CD4-positive, alpha-beta memory T cell (primary cell): ENCODE measurements at regions of chr1 and their contacts with region 1.

Region 1: DNA sequence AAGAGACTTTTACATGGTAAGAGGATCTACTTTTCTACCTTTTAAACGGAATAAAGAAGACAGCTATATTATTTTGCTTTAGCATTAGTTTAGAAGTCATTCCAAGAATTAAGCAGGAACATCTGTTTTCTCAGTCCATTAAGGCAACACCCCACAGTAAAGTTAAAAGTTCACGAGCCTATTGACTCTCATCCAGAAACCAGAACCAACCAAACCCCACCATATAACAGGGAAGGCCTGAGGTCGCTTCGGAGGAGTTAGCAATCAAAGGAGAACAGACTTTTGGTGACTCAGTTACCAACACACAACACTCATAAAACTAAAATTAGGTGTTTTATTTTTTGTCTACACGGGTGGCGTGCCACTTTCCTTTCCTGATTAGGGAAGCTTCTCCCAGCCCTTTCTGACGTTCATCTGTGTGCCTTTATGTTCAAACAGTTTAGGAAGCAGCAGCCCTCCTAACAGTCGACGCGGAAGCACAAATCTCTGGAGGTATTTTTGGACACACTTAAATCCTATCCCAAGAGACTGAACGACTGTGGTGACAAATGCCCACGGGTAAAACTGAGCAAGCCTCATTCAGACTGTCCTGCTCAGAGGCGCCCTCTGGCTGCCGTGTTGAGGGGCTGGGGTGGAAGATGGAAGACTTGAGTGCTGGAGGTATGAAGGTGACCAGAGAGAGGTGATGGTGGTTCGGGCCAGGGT is 8.6 kb upstream of the PLA2G2C start:
- DNase-seq: peak; percentile 58 to 72 (median 63)
- H3K4me3 ChIP-seq: no peak overlapping the region
- H3K4me3 Mint-ChIP-seq: no peak overlapping the region
- H3K27ac ChIP-seq: no peak overlapping the region
- H3K27ac Mint-ChIP-seq: peak overlapping the region in 1 of 7 donors; percentile 27
- H3K4me1 ChIP-seq: peaks cover 3% of the 10 kb centered on the region
- H3K4me1 Mint-ChIP-seq: peaks cover 0 to 7% (median 2%) of the 10 kb centered on the region in 4 donors
- H3K27me3 ChIP-seq: no peaks in the 10 kb centered on the region
- H3K27me3 Mint-ChIP-seq: peaks cover 2% of the 10 kb centered on the region in 2 donors

Region 2: DNA sequence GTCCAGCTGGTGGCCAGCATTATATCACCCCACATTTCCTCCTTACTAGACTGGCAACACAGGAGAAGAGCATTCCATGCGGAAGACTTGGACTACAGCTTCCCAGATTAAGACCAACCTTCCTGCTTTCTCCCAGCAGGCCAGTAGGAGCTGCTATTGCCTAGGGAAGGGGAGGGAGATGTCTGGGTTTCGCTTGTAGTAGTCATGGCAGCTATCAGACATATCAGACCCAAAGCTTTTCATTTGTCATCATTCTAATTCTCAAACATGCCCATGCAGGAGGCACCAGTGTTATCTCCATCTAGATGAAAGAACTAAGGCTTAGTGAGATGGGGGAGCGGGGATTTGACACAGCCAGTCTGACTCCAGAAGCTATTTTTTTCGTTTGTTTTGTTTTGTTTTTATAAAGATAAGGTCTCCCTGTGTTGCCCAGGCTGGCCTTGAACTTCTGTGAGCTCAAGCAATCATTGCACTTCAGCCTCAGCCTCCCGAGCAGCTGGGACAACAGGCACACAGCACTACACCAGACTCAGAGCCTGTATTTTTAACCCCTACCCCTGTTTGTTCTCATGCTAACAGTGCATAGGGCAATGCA is 220.0 kb before region 1 on chr1:
- CTCF ChIA-PET with region 1: interaction called, 10 read pairs
- POLR2A ChIA-PET with region 1: no interaction called
- intact Hi-C with region 1: loop called (anchors 2 kb)
- DNase-seq: peak in 4 of 5 donors; percentile 16 to 26 (median 24)
- H3K4me3 ChIP-seq: no peak overlapping the region
- H3K4me3 Mint-ChIP-seq: no peak overlapping the region
- H3K27ac ChIP-seq: no peak overlapping the region
- H3K27ac Mint-ChIP-seq: no peak overlapping the region
- H3K4me1 ChIP-seq: no peaks in the 10 kb centered on the region
- H3K4me1 Mint-ChIP-seq: peaks cover 0 to 2% (median 0%) of the 10 kb centered on the region in 4 donors
- H3K27me3 ChIP-seq: no peaks in the 10 kb centered on the region
- H3K27me3 Mint-ChIP-seq: peaks cover 22 to 23% of the 10 kb centered on the region in 2 donors

Region 3: GRCh38 chr1:20151906-20152598 is 42.9 kb before region 1 on chr1:
- CTCF ChIA-PET with region 1: interaction called, 33 read pairs
- POLR2A ChIA-PET with region 1: no interaction called
- intact Hi-C with region 1: loop called (anchors 1 kb)
- DNase-seq: peak; percentile 67 to 73 (median 70)
- H3K4me3 ChIP-seq: peak overlapping the region; percentile 49 to 56
- H3K4me3 Mint-ChIP-seq: peak overlapping the region; percentile 69 to 92 (median 84)
- H3K27ac ChIP-seq: no peak overlapping the region
- H3K27ac Mint-ChIP-seq: peak overlapping the region in 1 of 7 donors; percentile 24
- H3K4me1 ChIP-seq: peaks cover 17% of the 10 kb centered on the region
- H3K4me1 Mint-ChIP-seq: peaks cover 11 to 18% (median 14%) of the 10 kb centered on the region in 4 donors
- H3K27me3 ChIP-seq: no peaks in the 10 kb centered on the region
- H3K27me3 Mint-ChIP-seq: no peaks in the 10 kb centered on the region

Region 4: DNA sequence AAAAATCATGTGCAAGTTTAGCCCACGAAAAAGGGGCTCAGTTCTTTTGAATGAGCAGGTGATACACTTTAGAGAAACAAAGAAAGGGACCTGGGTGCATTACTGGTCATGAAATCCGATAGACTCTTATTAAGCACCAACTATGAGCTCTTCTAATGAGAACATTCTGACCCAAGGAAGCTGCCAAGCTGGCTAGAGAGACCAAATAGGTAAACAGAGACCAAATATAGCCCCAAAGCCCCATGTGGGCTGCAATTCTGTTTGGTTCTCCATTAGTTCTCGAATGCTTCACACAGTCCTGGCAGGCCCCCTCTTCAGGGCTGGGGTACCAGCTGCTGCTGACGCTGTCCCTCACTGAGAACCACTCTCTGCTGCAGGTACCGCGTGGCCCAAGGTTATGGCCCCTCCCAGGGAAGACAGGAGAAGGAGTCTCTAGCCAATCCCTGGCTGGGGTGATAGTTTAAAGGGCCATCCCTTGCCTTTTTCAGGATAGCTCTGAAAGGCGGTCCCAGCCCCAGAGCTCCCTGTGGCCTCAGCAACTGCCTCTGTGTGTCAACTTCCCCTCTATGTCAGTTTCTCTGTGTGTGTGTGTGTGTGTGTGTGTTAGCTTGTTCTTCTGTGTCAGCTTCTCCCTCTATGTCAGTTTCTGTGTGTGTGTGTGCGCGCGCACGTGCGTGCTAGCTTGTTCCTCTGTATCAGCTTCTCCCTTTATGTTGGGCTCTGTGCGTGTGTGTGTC is 16.1 kb before region 1 on chr1:
- CTCF ChIA-PET with region 1: interaction called, 58 read pairs
- POLR2A ChIA-PET with region 1: no interaction called
- intact Hi-C with region 1: no loop called
- DNase-seq: no peak
- H3K4me3 ChIP-seq: no peak overlapping the region
- H3K4me3 Mint-ChIP-seq: no peak overlapping the region
- H3K27ac ChIP-seq: no peak overlapping the region
- H3K27ac Mint-ChIP-seq: no peak overlapping the region
- H3K4me1 ChIP-seq: no peaks in the 10 kb centered on the region
- H3K4me1 Mint-ChIP-seq: peaks cover 6 to 13% (median 8%) of the 10 kb centered on the region in 4 donors
- H3K27me3 ChIP-seq: no peaks in the 10 kb centered on the region
- H3K27me3 Mint-ChIP-seq: no peaks in the 10 kb centered on the region

Region 5: GRCh38 chr1:20212685-20213331 is 17.9 kb after region 1 on chr1:
- CTCF ChIA-PET with region 1: interaction called, 34 read pairs
- POLR2A ChIA-PET with region 1: no interaction called
- intact Hi-C with region 1: no loop called
- DNase-seq: peak; percentile 50 to 64 (median 52)
- H3K4me3 ChIP-seq: no peak overlapping the region
- H3K4me3 Mint-ChIP-seq: peak overlapping the region in 6 of 8 donors; percentile 40 to 76 (median 67)
- H3K27ac ChIP-seq: no peak overlapping the region
- H3K27ac Mint-ChIP-seq: peak overlapping the region in 2 of 7 donors; percentile 10 to 16
- H3K4me1 ChIP-seq: peaks cover 9% of the 10 kb centered on the region
- H3K4me1 Mint-ChIP-seq: peaks cover 2 to 8% (median 3%) of the 10 kb centered on the region in 4 donors
- H3K27me3 ChIP-seq: peaks cover 21% of the 10 kb centered on the region
- H3K27me3 Mint-ChIP-seq: peaks cover 24 to 36% of the 10 kb centered on the region in 2 donors